ENCODE measurements at regions of chr3 and their contacts with region 1.

Region 1: DNA sequence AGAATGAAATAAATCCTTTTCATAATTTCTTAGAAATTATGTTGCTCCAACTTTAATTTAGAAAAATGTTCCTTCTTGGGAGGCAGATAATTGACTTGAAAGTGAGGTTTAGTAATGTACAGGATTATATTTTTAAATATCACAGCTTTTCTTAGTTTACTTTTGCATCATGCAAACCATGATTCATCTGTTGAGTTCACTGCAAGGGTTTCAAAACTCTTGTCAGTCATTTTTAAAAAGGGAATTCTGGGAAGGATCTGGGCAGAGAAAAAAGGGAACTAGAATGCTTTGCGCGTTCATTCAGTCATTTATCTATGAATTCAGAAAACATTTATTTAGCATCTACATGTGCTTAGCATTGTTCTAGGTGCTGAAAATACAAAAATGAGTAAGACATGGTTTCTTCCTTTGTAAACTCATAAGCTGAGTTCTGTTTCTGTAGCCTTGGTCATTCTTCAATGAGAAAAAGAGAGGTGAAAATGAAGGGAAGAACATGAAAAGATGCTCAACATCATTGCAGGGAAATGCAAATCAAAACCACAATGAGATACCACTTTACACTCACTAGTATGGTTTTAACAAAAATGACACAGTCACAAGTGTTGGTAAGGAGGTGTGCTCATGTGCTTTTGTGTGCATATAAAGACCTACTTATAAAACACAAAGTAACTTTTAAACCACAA is 209.1 kb downstream of the NR1D2 start:
- DNase-seq: no peak
- H3K4me3 Mint-ChIP-seq: no peak overlapping the region
- H3K27ac Mint-ChIP-seq: peak overlapping the region; percentile 4
- H3K4me1 Mint-ChIP-seq: peaks cover 33% of the 10 kb centered on the region
- H3K27me3 Mint-ChIP-seq: peaks cover 5% of the 10 kb centered on the region

Region 2: DNA sequence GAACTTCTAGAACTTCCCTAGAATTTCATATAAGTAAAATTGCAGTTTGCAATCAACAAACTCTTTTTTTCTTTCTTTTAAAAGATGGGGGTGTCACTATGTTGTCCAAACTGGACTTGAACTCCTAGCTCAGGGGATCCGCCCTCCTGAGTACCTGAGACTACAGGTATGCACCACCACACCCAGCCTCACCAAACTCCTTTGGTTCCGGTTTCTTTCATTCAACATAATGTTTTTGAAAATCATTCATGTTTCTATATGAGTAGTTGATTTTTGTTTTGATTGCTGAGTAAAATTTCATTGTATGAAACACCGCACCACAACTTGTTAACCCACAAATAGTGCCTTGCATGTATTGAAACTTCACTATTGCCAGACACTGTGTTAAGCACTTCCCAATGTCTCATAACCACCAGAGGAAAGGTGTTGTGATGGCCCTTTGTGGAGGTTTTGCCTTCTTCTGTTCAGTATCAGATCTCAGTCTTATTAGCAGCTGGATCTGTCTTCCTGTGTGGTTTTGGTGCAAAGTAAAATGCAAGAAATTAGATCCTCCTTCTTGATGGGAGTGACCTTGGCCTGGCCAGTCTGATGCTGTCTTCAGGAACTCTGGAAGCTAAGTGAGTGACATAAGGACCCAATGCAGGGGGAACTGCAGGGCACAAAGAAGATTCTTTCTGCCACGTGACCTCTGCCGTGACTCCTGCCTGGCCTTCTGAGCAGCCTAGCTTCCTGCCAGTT is 427.2 kb before region 1 on chr3:
- CTCF ChIA-PET with region 1: no interaction called
- intact Hi-C with region 1: loop called (anchors 10 kb)
- DNase-seq: peak; percentile 20
- H3K4me3 Mint-ChIP-seq: no peak overlapping the region
- H3K27ac Mint-ChIP-seq: no peak overlapping the region
- H3K4me1 Mint-ChIP-seq: peaks cover 9% of the 10 kb centered on the region
- H3K27me3 Mint-ChIP-seq: no peaks in the 10 kb centered on the region

Region 3: DNA sequence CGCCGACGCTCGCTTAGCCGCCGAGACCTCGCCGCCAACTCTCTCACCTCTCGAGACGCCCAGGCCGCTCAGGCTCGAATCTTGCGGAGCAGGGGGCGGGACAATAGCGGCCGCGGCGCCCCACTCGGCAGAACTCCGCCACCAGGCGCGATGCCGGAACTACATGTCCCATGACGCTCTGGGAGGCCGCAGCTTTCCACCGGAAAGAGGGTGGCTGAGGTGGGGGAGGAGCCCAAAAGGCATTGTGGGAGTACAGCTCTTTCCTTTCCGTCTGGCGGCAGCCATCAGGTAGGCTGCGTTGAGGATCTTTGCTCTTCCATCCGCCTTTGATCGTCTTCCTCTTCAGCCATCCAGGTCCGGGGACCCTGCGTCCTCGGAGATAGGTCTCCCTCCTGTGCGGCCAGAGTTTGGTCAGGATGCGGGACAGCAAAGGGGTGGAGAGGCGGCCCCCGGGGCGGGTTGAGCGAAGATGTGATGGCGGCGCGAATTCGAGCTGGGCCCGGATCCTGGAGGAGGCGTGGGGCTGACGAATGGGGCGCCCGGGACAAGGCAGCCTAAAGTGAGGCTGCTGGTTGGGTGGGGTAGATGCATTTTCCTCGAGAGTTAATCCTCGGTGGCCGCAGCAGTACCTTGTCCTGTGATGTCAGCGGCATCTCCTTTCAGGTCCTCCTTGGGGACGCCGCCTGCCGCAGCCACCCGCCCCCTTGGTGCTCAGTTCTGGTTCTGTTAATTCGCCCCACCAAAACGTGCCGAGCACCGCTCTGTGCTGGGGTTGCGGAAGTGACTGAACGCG is 237.1 kb before region 1 on chr3 and contains the starts of genes NKIRAS1 and RPL15:
- CTCF ChIA-PET with region 1: no interaction called
- intact Hi-C with region 1: loop called (anchors 10 kb)
- DNase-seq: peak; percentile 97
- H3K4me3 Mint-ChIP-seq: peak within 1 kb of the TSS; percentile 94
- H3K27ac Mint-ChIP-seq: peak within 1 kb of the TSS; percentile 99
- H3K4me1 Mint-ChIP-seq: peaks cover 47% of the 10 kb centered on the region
- H3K27me3 Mint-ChIP-seq: no peaks in the 10 kb centered on the region
- total RNA-seq, gene NKIRAS1: 2.4 to 3.1 TPM
- total RNA-seq, gene RPL15: 2,861 to 2,959 TPM

Region 4: GRCh38 chr3:23959135-23959900 is 194.8 kb before region 1 on chr3:
- CTCF ChIA-PET with region 1: no interaction called
- intact Hi-C with region 1: loop called (anchors 1 kb)
- DNase-seq: peak; percentile 37
- H3K4me3 Mint-ChIP-seq: no peak overlapping the region
- H3K27ac Mint-ChIP-seq: peak overlapping the region; percentile 4
- H3K4me1 Mint-ChIP-seq: peaks cover 27% of the 10 kb centered on the region
- H3K27me3 Mint-ChIP-seq: no peaks in the 10 kb centered on the region

Region 5: DNA sequence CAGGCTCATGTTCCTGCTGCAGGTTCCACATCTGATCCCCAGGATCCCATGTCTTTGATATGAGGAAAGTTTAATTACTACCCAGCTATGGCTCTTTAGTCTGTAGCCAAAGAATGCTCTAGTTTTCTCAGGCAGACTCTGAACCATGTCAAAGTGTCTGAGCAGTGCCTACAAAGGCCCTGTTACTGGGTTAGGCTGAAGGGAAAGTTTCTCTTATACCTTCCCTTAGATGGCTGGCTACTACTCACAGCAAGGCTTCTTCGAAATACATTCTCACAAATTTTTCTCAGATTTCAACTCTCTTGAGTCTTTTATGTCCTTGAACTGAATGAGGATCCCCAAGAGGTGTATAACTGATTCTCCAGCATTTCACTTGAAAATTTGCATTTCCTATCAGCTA is 106.6 kb before region 1 on chr3:
- CTCF ChIA-PET with region 1: no interaction called
- intact Hi-C with region 1: loop called (anchors 1 kb)
- DNase-seq: no peak
- H3K4me3 Mint-ChIP-seq: no peak overlapping the region
- H3K27ac Mint-ChIP-seq: no peak overlapping the region
- H3K4me1 Mint-ChIP-seq: peaks cover 10% of the 10 kb centered on the region
- H3K27me3 Mint-ChIP-seq: peaks cover 5% of the 10 kb centered on the region

Region 6: GRCh38 chr3:24215502-24215901 is 61.3 kb after region 1 on chr3:
- CTCF ChIA-PET with region 1: no interaction called
- intact Hi-C with region 1: no loop called
- DNase-seq: no peak
- H3K4me3 Mint-ChIP-seq: no peak overlapping the region
- H3K27ac Mint-ChIP-seq: no peak overlapping the region
- H3K4me1 Mint-ChIP-seq: no peaks in the 10 kb centered on the region
- H3K27me3 Mint-ChIP-seq: peaks cover 11% of the 10 kb centered on the region

Region 7: DNA sequence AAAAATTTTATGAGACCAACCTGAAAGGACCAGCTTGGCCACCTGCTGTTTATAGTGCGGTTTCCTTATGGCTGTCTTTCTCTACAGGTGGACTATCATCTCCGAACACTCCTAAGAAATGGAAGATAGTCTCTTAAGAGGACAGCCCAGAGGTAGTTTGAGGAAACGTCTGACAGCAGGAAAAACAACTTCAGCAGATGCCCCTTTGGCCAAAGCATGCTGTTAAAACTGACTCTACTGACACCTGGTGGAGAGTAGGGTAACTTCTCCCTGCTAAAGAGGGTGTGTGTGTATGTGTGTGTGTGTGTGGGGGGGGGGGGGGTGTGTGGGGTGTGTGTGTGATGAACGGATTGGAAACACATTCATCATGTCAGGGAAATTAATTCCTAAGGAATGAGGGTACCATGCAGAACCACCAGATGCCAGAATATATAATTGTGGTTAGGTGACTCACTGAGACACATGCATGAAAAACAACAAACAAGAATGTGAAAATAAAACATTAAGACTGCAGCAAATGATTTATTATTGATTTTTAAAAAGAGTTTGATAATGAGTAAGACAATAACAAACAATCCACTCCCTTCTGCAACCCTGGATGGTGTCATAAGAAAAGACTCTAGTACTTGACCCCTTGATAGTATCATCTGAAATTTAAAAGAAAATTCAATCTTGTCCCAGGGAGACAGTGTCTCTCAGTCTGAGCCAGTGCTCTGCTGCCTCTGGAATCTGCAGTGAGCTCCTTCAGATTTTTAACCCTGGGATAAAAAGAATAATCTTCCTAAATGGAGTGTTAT is 84.0 kb after region 1 on chr3:
- CTCF ChIA-PET with region 1: no interaction called
- intact Hi-C with region 1: loop called (anchors 1 kb)
- DNase-seq: peak; percentile 40
- H3K4me3 Mint-ChIP-seq: no peak overlapping the region
- H3K27ac Mint-ChIP-seq: no peak overlapping the region
- H3K4me1 Mint-ChIP-seq: no peaks in the 10 kb centered on the region
- H3K27me3 Mint-ChIP-seq: peaks cover 9% of the 10 kb centered on the region

Region 8: GRCh38 chr3:25789596-25790556 is 1635.7 kb after region 1 on chr3 and contains the start of gene OXSM:
- CTCF ChIA-PET with region 1: no interaction called
- intact Hi-C with region 1: loop called (anchors 10 kb)
- DNase-seq: peak; percentile 93
- H3K4me3 Mint-ChIP-seq: peak within 1 kb of the TSS; percentile 97
- H3K27ac Mint-ChIP-seq: peak within 1 kb of the TSS; percentile 97
- H3K4me1 Mint-ChIP-seq: peaks cover 42% of the 10 kb centered on the region
- H3K27me3 Mint-ChIP-seq: no peaks in the 10 kb centered on the region
- total RNA-seq, gene OXSM: 10.0 to 11.4 TPM

Measured in activated naive CD4-positive, alpha-beta T cell treated with anti-CD3 and anti-CD28 coated beads for 36 hours (primary cell).